ENCODE measurements at regions of chr2 and their contacts with region 1.

Region 1: DNA sequence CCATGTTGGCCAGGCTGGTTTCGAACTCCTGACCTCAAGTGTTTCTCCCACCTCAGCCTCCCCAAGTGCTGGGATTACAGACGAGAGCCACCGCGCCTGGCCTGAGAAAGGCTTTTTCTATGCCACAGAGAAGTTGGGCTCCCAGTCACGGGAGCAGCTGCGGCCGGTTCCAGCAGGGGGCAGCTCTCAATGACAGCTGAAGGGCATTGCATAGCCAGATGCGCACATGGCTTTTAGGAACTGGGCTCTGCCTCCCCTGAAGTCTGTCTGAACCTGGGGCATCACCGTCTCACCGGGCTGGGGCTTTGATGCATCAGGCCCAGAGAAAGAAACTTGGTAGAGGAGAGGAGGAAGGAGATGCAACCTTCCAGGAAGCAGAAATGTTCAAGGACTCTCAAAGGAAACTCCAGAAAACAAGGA is 84.2 kb upstream of the LAPTM4A start:
- DNase-seq: no peak
- H3K4me3 ChIP-seq: no peak overlapping the region
- CTCF ChIP-seq: peak; percentile 92

Region 2: DNA sequence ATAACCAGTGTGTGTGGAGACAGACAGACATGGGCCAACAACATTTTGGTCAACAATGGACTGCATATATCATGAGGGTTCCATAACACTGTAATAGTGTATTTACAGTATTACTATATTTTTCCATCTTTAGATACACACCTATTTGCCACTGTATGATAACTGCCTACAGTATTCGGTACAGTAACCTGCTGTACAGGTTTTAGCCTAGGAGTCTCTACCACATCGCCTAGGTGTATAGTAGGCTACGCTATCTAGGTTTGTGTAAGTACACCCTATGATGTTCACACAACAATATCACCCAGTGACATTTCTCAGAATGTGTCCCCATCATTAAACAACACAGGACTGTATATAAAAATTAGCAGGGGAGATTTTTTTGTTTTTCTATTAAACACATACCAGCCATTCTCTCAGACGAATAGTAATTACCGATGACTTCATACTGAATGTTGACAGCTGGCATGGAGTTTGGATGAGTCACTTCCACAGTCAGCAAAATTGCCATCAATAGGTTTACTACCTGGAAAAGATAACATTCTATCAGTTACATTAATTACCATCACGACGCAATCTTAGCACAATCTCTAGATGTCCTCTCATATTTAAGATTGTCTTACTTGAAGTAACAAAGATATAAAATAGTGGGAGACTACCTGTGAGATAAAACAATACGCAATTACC is 95.0 kb before region 1 on chr2:
- CTCF ChIA-PET with region 1: no interaction called
- POLR2A ChIA-PET with region 1: no interaction called
- DNase-seq: no peak
- H3K4me3 ChIP-seq: no peak overlapping the region
- CTCF ChIP-seq: no peak

Region 3: GRCh38 chr2:20120569-20121416 is 14.8 kb before region 1 on chr2:
- CTCF ChIA-PET with region 1: interaction called, 47 read pairs
- POLR2A ChIA-PET with region 1: no interaction called
- DNase-seq: no peak
- H3K4me3 ChIP-seq: no peak overlapping the region
- CTCF ChIP-seq: no peak

Region 4: DNA sequence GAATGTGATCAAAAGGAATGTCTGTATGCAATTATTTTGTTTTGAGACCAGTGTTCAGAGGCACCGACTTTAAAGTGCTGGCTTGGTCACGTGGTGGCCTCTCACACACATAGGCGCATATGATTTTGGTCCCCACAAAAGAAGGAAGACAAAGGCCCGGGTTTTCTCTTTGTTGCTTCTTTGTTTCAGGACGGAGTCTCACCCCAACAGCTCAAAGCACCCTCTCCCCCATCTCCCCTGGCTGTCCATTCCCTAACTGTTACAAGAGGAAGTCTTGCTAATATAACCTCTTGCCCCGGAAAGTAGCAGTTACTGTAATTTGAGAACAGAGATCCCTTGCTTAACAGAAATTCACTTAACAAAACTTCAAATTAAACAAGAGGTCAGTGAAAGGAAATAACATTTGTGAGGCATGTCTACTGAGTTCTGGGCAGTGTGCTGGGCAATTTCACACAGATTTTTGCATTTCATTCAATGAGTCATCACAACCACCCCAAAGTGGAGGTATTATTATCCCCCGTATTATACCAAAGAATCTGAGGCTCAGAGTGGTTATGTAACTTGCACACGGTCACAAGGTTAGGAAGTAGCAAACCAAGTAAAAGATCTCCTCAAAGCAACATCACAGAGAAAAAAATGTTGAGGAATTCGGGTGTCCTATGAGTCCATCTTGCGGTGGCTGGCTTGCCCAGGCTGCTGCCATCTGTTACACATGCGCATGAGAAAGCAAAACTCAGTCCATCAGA is 13.5 kb after region 1 on chr2:
- CTCF ChIA-PET with region 1: interaction called, 19 read pairs
- POLR2A ChIA-PET with region 1: no interaction called
- DNase-seq: peak; percentile 88
- H3K4me3 ChIP-seq: peak overlapping the region; percentile 9; the same call in 1 of the 2 replicates
- CTCF ChIP-seq: peak; percentile 2

Region 5: GRCh38 chr2:20190876-20191713 is 55.5 kb after region 1 on chr2:
- CTCF ChIA-PET with region 1: interaction called, 14 read pairs
- POLR2A ChIA-PET with region 1: no interaction called
- DNase-seq: no peak
- H3K4me3 ChIP-seq: no peak overlapping the region
- CTCF ChIP-seq: peak; percentile 61

Region 6: GRCh38 chr2:20225294-20226151 is 89.9 kb after region 1 on chr2:
- CTCF ChIA-PET with region 1: interaction called, 25 read pairs
- POLR2A ChIA-PET with region 1: interaction called, 5 read pairs
- DNase-seq: no peak
- H3K4me3 ChIP-seq: peak overlapping the region; percentile 64
- CTCF ChIP-seq: peak; percentile 76

Measured in AG04449 (cell line).